Right ventricle myocardium inferior (tissue), 1 donor: ENCODE measurements at regions of chr13 and their contacts with region 1.

Region 1: GRCh38 chr13:41054212-41054877 is 7.0 kb upstream of the WBP4 start:
- DNase-seq: no peak
- ATAC-seq: peak; percentile 23

Region 2: GRCh38 chr13:40697711-40698110 is 356.6 kb before region 1 on chr13:
- intact Hi-C with region 1: no loop called
- DNase-seq: no peak
- ATAC-seq: no peak

Region 3: DNA sequence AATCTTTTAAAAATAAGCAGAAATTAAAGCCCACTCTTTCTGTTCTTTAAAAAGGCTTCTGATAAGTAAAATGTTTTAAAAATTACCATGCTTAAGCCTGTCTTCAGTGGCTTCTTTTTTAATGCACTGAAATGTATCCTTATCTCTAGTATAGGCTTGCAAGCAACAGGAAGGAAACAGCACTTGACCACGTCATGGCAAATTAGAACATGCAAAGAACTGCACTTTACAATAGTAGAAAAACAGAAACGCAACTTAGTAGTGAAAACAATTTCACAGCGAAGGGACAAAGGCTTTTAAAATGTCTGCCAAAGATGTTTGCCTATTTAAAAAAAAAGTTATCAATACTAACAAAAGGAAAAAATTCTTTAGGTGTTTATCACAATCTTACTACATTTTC is 71.6 kb before region 1 on chr13:
- intact Hi-C with region 1: loop called (anchors 5 kb)
- DNase-seq: no peak
- ATAC-seq: peak; percentile 66

Region 4: DNA sequence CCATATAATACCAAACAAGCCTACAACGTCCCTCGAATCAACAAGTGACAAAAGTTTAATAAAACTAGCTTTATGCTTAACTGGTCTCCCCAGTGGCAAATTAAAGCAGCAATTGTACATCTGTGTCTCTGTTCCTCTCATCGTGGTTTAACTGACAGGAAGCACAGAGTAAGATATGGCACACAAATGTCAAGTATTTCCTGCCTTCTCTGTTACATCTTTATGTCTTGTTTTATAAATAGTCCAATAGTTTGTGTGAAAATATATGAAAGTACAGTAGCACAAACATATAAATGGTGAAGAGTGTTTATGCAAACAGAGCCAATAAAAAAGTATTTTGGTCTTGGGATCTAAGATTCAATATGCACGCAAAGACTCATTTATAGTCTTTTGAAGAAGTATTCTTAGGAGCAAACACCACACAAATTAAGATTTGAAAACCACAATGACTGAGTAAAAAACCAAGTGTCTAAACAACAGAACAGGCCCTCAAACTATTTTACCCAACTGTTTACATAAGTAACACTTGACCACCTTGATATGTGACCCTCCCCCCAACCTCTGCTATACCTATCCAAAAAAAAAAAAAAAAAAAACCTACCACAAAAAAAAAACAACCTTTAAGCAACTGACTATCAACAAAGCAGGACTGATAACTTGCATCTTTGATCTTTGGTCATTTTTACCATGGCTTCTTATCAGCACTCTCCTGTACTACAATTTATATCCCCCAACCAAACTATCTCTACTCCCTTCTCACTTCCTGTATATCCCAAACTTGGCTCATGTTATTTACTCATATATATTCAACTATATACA is 49.3 kb before region 1 on chr13:
- intact Hi-C with region 1: loop called (anchors 5 kb)
- DNase-seq: no peak
- ATAC-seq: no peak

Region 5: DNA sequence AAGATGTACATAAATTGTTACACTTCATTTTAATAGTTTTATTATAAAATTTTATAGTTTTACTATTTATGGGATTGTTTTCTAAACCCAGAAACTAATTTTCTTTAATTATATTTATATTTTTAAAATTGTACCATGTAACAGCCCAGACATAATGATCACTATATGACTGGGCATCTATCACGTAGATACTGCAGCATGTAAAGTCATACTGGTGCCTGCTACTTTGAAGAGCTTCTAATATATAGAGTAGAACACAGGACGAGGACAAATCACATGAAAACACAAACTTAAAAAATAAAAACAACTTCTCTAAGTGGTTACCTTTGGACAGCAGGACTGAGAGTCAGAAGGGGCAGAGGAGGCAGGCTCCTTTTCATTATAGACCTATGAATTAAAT is 40.5 kb before region 1 on chr13:
- intact Hi-C with region 1: loop called (anchors 5 kb)
- DNase-seq: no peak
- ATAC-seq: no peak